AG04450 (cell line): ENCODE measurements at regions of chr7 and their contacts with region 1.

Region 1: GRCh38 chr7:101244375-101245146 is at the start of gene FIS1:
- DNase-seq: peak; percentile 52
- H3K4me3 ChIP-seq: peak within 1 kb of the TSS; percentile 98
- H3K27ac ChIP-seq: peak within 1 kb of the TSS; percentile 92
- H3K27me3 ChIP-seq: no peaks in the 10 kb centered on the region
- CTCF ChIP-seq: peak; percentile 87
- polyA plus RNA-seq, gene FIS1: 170 and 198 TPM in 2 replicates

Region 2: DNA sequence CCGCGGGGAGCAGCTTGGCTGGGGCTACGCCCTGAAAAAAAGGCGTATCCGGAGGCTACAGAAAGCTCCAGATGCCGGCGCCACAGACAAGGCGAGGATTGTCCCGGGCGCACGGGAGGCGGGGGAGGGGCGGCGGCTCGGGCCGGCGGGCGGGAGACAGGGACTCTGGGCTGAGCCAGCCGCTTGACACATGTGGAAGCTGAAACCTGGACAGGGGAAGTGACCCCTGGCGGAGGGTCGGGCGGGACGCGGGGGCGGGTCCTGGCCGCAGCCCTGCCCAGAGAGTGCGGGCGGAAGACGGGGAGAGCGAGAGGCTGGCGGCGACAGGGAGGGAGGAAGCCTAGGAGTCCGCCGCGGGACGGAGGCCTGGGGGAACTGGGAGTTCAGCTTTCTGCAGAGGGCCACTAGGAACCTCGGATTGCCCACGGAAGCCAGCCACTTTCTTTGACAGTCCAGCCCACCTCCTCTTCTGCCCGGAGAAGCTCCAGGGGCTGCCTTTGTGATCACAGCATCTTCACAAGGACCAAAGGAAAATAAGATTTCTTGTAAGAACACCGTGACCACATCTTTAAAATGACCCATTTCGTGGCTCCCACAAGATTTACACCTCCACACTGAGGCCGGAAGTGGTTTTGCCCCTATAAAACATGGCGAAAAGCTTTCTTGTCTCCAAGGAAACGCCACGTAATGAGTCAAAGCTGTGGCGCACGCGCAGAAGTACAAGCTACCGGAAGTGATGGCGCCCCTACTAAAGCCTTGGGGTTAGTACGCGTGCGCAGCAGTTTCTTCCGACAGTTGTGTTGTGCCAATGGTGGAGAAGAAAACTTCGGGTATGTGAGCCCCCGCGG is 26.9 kb before region 1 on chr7 and contains the starts of genes PLOD3 and ZNHIT1:
- CTCF ChIA-PET with region 1: interaction called, 14 read pairs
- POLR2A ChIA-PET with region 1: interaction called, 13 read pairs
- DNase-seq: peak; percentile 95
- H3K4me3 ChIP-seq: peak within 1 kb of the TSS; percentile 92
- H3K27ac ChIP-seq: peak within 1 kb of the TSS; percentile 96
- H3K27me3 ChIP-seq: no peaks in the 10 kb centered on the region
- CTCF ChIP-seq: 0 out of 2 replicates have a peak, but pooled peaks have one; percentile 11
- polyA plus RNA-seq, gene PLOD3: 60.6 and 86.9 TPM in 2 replicates
- polyA plus RNA-seq, gene ZNHIT1: 36.0 and 46.2 TPM in 2 replicates